BJ (cell line): ENCODE measurements at regions of chr2 and their contacts with region 1.

Region 1: DNA sequence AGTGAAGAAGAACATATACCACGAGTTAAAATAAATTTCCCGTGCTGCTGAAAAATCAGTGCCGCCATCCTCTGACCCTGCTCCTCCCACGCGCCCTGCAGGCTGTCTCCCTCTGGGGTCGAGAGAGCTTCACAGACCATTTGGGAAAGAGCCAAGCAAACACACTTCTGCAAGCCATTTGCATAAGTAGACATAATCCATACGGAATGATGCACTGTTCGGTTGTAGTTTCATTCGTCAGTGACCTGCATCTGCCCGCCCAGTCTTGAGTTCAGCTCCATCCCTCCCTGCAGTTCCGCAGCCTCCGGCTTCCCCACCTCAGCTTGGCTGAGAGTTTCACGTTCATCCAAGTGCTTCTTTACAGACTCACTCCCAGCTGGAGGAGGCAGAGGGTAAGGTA is 69.6 kb downstream of the TRAPPC12 start:
- DNase-seq: no peak
- H3K4me3 ChIP-seq: no peak overlapping the region
- H3K27me3 ChIP-seq: no peaks in the 10 kb centered on the region
- CTCF ChIP-seq: no peak

Region 2: DNA sequence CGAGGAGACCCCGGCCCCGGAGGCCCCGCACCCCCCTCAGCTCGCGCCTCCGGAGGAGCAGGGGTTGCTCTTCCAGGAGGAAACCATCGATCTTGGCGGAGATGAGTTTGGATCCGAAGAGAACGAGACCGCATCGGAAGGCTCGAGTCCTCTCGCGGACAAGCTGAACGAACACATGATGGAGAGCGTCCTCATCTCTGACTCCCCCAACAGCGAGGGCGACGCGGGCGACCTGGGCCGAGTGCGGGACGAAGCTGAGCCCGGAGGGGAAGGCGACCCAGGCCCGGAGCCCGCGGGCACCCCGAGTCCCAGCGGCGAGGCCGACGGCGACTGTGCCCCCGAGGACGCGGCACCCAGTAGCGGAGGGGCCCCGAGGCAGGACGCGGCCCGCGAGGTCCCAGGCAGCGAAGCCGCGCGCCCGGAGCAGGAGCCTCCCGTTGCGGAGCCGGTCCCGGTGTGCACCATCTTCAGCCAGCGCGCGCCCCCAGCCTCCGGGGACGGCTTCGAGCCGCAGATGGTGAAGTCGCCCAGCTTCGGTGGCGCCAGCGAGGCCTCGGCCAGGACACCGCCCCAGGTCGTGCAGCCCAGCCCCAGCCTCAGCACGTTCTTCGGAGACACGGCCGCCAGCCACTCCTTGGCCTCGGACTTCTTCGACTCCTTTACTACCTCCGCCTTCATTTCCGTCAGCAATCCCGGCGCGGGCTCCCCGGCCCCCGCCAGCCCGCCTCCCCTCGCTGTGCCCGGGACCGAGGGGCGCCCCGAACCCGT is 61.3 kb before region 1 on chr2:
- CTCF ChIA-PET with region 1: no interaction called
- POLR2A ChIA-PET with region 1: no interaction called
- DNase-seq: no peak
- H3K4me3 ChIP-seq: no peak overlapping the region
- H3K27me3 ChIP-seq: no peaks in the 10 kb centered on the region
- CTCF ChIP-seq: no peak

Region 3: GRCh38 chr2:3461801-3462492 is 12.9 kb after region 1 on chr2:
- CTCF ChIA-PET with region 1: interaction called, 16 read pairs
- POLR2A ChIA-PET with region 1: interaction called, 3 read pairs
- DNase-seq: no peak
- H3K4me3 ChIP-seq: no peak overlapping the region
- H3K27me3 ChIP-seq: no peaks in the 10 kb centered on the region
- CTCF ChIP-seq: peak; percentile 85

Region 4: GRCh38 chr2:3505771-3506170 is 56.7 kb after region 1 on chr2:
- CTCF ChIA-PET with region 1: no interaction called
- POLR2A ChIA-PET with region 1: no interaction called
- DNase-seq: no peak
- H3K4me3 ChIP-seq: no peak overlapping the region
- H3K27me3 ChIP-seq: no peaks in the 10 kb centered on the region
- CTCF ChIP-seq: no peak